Transverse colon (tissue), 4 donors: ENCODE measurements at regions of chr9 and their contacts with region 1.

Region 1: GRCh38 chr9:626596-626995 is 214.9 kb upstream of the DMRT1 start:
- DNase-seq: no peak
- H3K4me3 ChIP-seq: no peak overlapping the region
- H3K27ac ChIP-seq: peak overlapping the region; percentile 69 to 86 (median 72)
- H3K4me1 ChIP-seq: peaks cover 12 to 38% (median 15%) of the 10 kb centered on the region in 4 donors
- H3K27me3 ChIP-seq: no peaks in the 10 kb centered on the region
- CTCF ChIP-seq: no peak
- EP300 ChIP-seq: no peak
- POLR2A ChIP-seq: no peak

Region 2: DNA sequence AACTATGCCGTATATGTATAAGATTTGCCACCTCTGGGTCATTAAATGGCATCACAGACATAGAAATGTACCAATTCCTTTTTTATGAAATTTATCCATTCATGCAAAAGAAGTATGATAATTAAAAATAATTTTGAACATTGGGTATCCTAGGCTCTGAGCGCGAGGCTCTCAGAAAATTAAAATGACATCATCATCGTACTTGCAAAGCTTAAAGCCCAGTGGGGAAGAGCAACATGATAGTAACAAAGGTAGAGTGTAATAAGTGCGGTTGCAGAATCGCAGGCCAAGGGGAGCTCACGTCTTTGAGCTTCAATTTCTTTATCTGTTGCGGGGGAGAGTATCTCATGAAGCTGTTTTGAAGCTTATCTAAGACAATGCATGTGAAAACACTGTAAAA is 21.8 kb after region 1 on chr9:
- in situ Hi-C with region 1: no loop called
- intact Hi-C with region 1: loop called (anchors 1 kb)
- DNase-seq: no peak
- H3K4me3 ChIP-seq: no peak overlapping the region
- H3K27ac ChIP-seq: no peak overlapping the region
- H3K4me1 ChIP-seq: peaks cover 4 to 29% (median 10%) of the 10 kb centered on the region in 4 donors
- H3K27me3 ChIP-seq: no peaks in the 10 kb centered on the region
- CTCF ChIP-seq: no peak
- EP300 ChIP-seq: no peak
- POLR2A ChIP-seq: no peak

Region 3: DNA sequence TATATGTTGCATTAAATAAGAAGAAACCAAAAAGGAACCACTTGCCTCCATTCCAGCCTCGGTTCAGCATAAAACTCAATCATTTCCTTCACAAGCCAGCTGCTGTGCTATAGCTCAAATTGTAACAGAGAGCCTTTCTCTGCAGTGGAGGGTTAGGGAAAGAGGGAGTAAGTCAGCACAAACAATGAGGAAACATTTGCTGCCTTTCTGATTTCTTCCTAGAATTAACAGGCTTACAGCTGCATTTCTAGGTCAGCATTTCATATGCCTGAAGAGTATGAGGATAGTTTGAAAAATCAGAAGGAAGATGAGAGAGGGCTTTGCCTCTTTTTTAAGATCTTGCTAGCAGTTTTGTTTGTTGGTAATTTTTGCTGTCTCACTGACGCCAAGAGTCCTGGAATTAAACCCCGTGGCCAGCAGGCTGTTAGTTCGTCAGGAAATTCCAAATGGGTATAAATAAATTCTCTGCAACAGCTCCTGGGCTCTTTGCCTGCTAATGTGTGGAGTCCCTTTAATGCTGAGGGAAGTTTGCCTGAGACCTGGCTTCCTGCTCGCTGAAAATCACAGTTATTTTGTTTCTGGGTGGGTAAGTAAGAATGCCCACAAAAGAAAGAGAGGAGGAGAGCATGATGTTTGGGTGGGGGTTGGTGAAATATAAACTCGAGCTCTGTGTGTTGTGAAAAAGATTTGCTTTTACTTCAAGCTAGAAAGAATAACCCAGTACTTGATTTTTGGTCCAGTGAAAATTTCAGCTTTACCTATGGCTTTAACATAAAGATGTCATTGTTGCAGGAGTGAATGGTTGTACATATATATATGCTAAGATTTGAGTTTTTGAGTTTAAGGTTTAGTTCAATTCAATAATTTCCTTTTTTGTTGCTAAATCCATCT is 66.8 kb after region 1 on chr9:
- in situ Hi-C with region 1: no loop called
- intact Hi-C with region 1: loop called (anchors 10 kb)
- DNase-seq: peak; percentile 32
- H3K4me3 ChIP-seq: peak overlapping the region in 1 of 4 donors; percentile 7
- H3K27ac ChIP-seq: peak overlapping the region; percentile 82 to 90 (median 86)
- H3K4me1 ChIP-seq: peaks cover 20 to 44% (median 25%) of the 10 kb centered on the region in 4 donors
- H3K27me3 ChIP-seq: no peaks in the 10 kb centered on the region
- CTCF ChIP-seq: peak in 1 of 5 experiments; percentile 15
- EP300 ChIP-seq: no peak
- POLR2A ChIP-seq: no peak

Region 4: DNA sequence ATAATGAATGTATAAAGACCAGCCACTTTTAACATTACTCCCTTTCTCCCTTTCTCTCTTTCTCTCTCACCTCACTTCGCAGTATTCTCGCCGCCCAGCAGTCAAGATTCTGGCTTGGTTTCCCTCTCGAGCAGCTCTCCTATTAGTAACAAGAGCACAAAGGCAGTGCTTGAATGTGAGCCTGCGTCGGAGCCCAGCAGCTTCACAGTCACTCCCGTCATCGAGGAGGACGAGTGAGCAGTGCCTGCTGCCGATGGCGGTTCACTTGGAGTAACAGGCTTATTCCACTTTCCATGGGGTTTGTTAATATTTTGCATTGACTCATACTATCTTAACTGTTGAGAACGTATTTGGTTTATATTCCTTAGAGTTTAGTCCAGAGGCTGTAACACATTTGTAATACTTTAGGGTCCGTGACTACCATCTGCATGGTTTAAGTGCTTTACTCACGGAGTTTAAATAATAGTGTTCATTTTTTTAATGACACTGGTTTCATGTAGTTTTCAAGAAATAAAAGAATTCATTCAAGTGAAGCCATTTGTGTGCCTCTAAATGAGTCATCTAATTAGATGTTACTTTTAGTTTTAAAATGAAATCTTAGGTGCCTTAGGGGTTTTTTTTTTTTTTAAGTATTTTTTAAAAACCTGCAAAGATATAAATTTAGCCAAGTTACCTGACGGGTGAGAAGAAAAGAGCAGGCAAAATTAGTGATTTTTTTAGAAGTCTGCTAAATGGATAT is 341.5 kb after region 1 on chr9:
- in situ Hi-C with region 1: no loop called
- intact Hi-C with region 1: no loop called
- DNase-seq: no peak
- H3K4me3 ChIP-seq: no peak overlapping the region
- H3K27ac ChIP-seq: no peak overlapping the region
- H3K4me1 ChIP-seq: peaks cover 10 to 37% (median 25%) of the 10 kb centered on the region in 4 donors
- H3K27me3 ChIP-seq: peaks cover 100% of the 10 kb centered on the region
- CTCF ChIP-seq: no peak
- EP300 ChIP-seq: no peak
- POLR2A ChIP-seq: no peak